MCF 10A (cell line): ENCODE measurements at regions of chr11 and their contacts with region 1.

Region 1: GRCh38 chr11:16902781-16903378 is 111.3 kb downstream of the PLEKHA7 start:
- DNase-seq: no peak
- H3K4me3 Mint-ChIP-seq: no peak overlapping the region
- H3K27ac Mint-ChIP-seq: peak overlapping the region; percentile 61
- H3K4me1 Mint-ChIP-seq: peaks cover 25% of the 10 kb centered on the region
- H3K27me3 Mint-ChIP-seq: no peaks in the 10 kb centered on the region
- CTCF ChIP-seq: no peak

Region 2: GRCh38 chr11:16924826-16925560 is 22.1 kb after region 1 on chr11:
- CTCF ChIA-PET with region 1: interaction called, 6 read pairs
- POLR2A ChIA-PET with region 1: interaction called, 6 read pairs
- intact Hi-C with region 1: loop called (anchors 2 kb)
- DNase-seq: peak; percentile 85
- H3K4me3 Mint-ChIP-seq: peak overlapping the region; percentile 79
- H3K27ac Mint-ChIP-seq: peak overlapping the region; percentile 10
- H3K4me1 Mint-ChIP-seq: peaks cover 24% of the 10 kb centered on the region
- H3K27me3 Mint-ChIP-seq: no peaks in the 10 kb centered on the region
- CTCF ChIP-seq: no peak